Motor neuron (in vitro differentiated cells): ENCODE measurements at regions of chr4 and their contacts with region 1.

Region 1: DNA sequence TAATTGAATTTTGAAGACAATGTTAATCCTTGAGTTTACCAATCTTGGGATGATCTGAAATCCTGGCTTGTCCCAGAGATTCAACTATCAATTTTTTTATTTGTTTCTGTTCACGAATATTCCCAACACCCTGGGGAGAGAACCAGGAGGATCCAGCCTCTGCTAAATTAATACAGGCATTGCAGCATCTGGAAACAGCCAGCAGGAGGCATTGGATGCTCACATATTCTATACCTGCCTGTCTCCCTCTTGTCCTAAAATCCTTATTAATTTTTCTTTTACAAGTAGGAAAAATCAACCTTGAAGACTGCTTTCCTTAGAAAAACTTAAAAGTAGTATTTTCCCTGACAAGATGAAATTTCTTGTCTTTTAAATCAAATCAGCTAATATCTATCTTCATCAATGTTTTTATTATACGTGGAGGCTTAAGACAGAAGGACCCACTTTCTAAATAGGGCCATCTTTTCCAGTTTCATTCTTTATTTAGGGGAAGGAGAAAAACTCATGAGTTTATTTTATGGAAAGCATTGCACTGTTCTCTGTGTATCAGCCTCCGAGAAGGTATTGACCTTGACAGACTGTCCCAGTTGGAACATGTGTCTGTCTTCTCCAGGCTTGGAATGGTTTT is 102.4 kb downstream of the CLNK start:
- ATAC-seq: peak; percentile 37 to 72 (median 60)
- H3K4me3 ChIP-seq: no peak overlapping the region
- H3K27ac ChIP-seq: no peak overlapping the region
- H3K4me1 ChIP-seq: no peaks in the 10 kb centered on the region

Region 2: DNA sequence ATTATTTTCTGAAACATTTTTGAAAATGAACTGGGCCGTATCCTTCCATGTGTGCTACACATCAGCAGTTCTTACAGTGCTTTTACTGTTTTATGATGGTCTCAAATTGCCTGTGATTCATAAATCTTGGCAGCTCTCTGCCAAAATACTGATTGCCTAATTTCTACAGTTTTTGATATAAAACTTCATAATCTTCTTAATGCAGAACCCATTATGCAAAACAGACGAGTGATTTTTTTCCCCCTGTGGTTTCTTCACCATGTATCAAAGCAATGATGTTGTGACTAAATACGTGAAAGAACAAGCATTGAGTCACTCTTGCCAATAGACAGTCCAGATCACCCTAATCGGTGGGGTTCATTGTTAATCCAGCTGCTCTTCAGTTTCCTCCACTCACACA is 309.1 kb before region 1 on chr4:
- in situ Hi-C with region 1: no loop called
- ATAC-seq: no peak
- H3K4me3 ChIP-seq: no peak overlapping the region
- H3K27ac ChIP-seq: no peak overlapping the region
- H3K4me1 ChIP-seq: no peaks in the 10 kb centered on the region

Region 3: DNA sequence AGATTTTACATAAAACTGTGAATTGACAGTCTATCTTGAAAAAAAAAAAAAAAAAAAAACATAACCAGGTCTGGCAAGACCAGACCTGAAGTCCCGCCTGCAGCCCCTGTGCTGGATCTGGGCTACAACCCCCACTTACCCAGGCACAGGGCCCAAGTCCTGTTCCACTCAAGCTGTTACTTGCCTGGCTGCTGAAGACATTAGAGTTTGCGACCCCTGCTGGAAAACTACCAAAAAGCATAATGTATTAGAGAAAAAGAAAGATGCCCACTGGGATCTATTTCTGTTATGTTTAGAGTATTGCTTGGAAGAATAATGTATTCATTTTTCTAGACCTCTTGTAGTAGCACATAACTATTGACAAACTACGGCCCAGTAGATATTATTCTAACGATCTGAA is 841.8 kb after region 1 on chr4:
- in situ Hi-C with region 1: loop called in 3 of 9 experiments (anchors 10 to 25 kb)
- ATAC-seq: no peak
- H3K4me3 ChIP-seq: no peak overlapping the region
- H3K27ac ChIP-seq: no peak overlapping the region
- H3K4me1 ChIP-seq: peaks cover 0 to 11% of the 10 kb centered on the region in 2 donors